Colonic mucosa (tissue), 4 donors: ENCODE measurements at regions of chr10 and their contacts with region 1.

Region 1: DNA sequence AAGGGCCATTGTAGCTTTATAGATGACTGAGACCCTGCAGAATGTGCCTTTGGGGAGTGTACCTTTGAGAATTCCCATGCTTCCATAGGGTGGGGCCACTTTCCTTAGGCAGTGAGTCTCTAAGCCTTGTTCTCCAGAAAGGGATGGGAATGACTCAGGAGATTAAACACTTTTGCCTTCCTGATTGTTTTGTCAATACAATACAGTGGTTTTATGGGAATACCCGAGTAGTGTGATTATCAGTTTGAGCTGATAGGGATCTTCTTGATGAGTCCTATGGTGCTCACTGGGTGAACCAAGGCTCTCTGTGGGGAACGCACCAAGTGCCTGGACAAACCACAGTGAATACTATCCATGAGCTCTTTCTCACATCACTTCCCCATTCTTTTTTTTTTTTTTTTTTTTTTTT is 6.3 kb downstream of the MYOF start:
- DNase-seq: peak; percentile 75
- H3K4me3 ChIP-seq: no peak overlapping the region
- H3K27ac ChIP-seq: peak overlapping the region; percentile 80
- H3K4me1 ChIP-seq: peaks cover 19% of the 10 kb centered on the region
- H3K27me3 ChIP-seq: no peaks in the 10 kb centered on the region
- CTCF ChIP-seq: no peak

Region 2: GRCh38 chr10:93437088-93437945 is 38.5 kb before region 1 on chr10:
- intact Hi-C with region 1: loop called (anchors 5 kb)
- DNase-seq: no peak
- H3K4me3 ChIP-seq: no peak overlapping the region
- H3K27ac ChIP-seq: peak overlapping the region; percentile 85
- H3K4me1 ChIP-seq: no peaks in the 10 kb centered on the region
- H3K27me3 ChIP-seq: no peaks in the 10 kb centered on the region
- CTCF ChIP-seq: no peak

Region 3: DNA sequence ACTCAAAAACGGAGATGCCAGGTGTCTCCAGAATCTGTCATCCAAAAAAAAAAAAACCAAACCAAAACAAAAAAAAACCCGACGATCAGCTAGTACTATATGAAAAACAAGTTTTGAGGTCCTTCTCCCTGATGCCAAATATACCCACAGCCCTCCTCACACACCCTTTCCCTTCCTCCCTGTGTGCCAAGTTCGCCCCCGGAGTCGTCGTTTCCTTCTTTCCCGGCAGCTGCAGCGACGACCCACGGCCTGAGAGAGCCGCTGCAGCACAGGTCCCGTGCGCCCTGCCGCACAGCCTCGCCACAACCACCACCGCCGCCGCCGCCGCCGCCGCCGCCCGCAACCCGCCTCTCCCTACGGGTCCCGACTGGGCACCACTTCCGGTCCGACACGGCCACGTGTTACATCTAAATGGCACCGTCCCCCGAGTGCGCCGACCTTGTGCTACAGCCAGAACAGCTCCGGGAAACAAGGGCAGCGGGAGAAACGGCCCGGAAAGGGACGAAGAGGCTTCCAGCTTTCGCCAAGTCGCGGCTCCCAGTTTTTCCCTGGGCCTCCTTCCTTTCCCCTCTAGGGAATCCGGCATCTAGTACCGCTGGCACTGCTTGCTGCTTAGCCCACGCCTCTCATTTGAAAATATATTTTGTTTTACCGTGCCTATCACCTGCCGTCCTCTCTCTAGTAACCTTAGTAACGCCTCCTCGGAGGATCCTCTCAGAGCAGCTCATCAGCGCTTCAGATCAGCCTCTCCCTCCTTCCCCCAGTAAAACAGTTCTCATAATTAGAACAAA is 226.5 kb after region 1 on chr10 and contains the start of gene FRA10AC1:
- intact Hi-C with region 1: no loop called
- DNase-seq: peak; percentile 94
- H3K4me3 ChIP-seq: peak within 1 kb of the TSS; percentile 61
- H3K27ac ChIP-seq: peak within 1 kb of the TSS; percentile 76
- H3K4me1 ChIP-seq: peaks cover 8% of the 10 kb centered on the region
- H3K27me3 ChIP-seq: no peaks in the 10 kb centered on the region
- CTCF ChIP-seq: no peak
- total RNA-seq, gene FRA10AC1: 13.5 to 19.4 TPM